Left ventricle myocardium inferior (tissue), 1 donor: ENCODE measurements at regions of chr18 and their contacts with region 1.

Region 1: GRCh38 chr18:31399306-31400032 is 22.9 kb downstream of the DSG4 start:
- DNase-seq: no peak
- H3K4me3 ChIP-seq: no peak overlapping the region
- H3K27ac ChIP-seq: no peak overlapping the region
- H3K4me1 ChIP-seq: peaks cover 17% of the 10 kb centered on the region
- H3K27me3 ChIP-seq: no peaks in the 10 kb centered on the region
- CTCF ChIP-seq: no peak

Region 2: DNA sequence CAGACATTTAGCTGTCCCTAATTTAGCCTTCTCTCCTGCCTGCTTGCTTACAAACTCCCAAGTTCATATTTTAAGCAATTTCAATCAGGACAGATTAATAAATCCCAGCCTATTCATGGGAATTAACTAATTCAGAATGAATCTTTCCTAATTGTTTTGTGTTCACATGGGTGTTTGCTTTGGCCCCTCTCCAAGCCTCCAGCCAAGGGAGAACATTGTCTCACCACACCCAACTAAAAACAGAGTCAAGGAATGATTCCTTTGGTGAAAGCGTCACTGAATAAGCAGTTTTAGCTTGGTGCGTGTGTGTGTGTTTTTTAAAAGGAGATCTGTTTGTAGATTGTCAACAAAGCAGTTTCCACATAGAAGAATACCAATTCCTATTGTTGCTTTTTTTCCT is 124.6 kb before region 1 on chr18:
- intact Hi-C with region 1: loop called (anchors 10 kb)
- DNase-seq: peak; percentile 61
- H3K4me3 ChIP-seq: peak overlapping the region; percentile 35
- H3K27ac ChIP-seq: peak overlapping the region; percentile 68
- H3K4me1 ChIP-seq: peaks cover 37% of the 10 kb centered on the region
- H3K27me3 ChIP-seq: no peaks in the 10 kb centered on the region
- CTCF ChIP-seq: no peak

Region 3: DNA sequence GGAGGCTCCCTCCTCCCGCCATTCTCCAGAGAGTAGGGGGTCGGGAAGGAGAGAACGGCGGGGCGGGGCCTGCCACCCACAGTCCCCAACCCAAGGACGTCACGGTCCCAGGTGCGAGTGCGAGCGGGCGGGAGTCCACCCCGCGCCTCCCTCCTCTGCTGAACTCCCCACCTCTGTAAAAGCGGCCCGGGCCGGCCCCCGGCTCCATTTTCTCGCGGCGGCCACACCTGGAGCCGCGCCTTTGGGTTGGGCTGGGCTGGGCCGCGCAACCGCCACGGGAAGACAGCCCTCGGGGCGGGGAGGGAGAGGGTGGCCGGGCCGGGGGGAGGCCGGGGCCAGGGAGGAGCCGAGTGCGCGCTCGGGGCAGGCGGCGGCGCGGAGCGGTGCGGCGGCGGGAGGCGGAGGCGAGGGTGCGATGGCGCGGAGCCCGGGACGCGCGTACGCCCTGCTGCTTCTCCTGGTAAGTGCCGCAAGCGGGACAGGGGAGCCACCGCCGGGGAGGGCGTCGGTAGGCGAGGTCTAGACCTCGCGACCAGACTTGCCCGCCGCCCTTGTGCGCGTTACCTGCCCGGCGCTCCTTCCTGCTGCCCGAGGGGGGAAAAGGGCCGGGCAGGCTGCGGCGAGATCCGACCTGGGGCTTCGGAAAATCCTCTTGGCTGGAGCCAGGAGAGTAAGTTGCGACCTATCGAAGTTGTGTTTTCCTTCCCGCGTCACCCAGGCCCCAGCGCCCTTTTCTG is 98.5 kb after region 1 on chr18 and contains the start of gene DSG2:
- intact Hi-C with region 1: no loop called
- DNase-seq: peak; percentile 76
- H3K4me3 ChIP-seq: peak within 1 kb of the TSS; percentile 80
- H3K27ac ChIP-seq: peak within 1 kb of the TSS; percentile 82
- H3K4me1 ChIP-seq: peaks cover 30% of the 10 kb centered on the region
- H3K27me3 ChIP-seq: peaks cover 17% of the 10 kb centered on the region
- CTCF ChIP-seq: peak; percentile 28
- total RNA-seq, gene DSG2: 42.6 TPM